ENCODE measurements at regions of chr14 and their contacts with region 1.

Region 1: DNA sequence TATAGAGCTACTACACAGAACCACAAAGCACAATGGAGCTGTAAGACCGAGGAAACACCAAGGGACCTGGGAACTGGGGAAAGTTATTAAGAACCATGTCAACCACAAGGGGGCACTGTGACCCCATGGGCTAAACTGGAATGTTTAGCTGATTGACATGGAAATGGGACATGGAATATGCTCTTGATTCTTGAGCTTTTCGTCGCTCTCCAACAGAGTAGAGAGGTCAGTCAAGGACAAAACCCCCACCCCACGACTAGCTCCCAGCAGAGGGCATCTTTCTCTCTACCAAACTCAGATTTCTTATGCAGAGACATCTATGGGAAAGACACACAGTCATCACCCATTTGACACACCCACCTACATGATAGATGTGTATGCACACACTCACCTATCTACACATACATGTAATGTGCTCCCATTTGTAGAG is 10.1 kb downstream of the NDRG2 start:
- DNase-seq: peak; percentile 65
- H3K4me3 ChIP-seq: no peak overlapping the region
- H3K27ac ChIP-seq: no peak overlapping the region
- H3K27me3 ChIP-seq: peaks cover 20% of the 10 kb centered on the region
- CTCF ChIP-seq: peak; percentile 96

Region 2: DNA sequence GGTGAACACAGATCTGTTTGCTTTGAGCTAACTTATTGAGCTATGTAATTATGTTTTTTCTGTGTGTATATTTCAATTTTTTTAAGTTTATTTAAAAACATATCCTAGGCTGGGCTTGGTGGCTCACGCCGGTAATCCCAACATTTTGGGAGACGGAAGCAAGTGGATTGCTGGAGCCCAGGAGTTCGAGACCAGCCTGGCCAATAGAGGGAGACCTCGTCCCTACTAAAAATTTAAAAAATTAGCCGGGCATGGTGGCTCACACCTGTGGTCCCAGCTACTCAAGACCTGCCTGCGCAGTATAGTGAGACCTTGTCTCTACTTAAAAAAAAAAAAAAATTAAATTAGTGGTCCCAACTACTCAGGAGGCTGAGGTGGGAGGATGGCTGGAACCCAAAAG is 195.9 kb before region 1 on chr14:
- CTCF ChIA-PET with region 1: no interaction called
- POLR2A ChIA-PET with region 1: no interaction called
- DNase-seq: no peak
- H3K4me3 ChIP-seq: no peak overlapping the region
- H3K27ac ChIP-seq: no peak overlapping the region
- H3K27me3 ChIP-seq: no peaks in the 10 kb centered on the region
- CTCF ChIP-seq: no peak

Region 3: DNA sequence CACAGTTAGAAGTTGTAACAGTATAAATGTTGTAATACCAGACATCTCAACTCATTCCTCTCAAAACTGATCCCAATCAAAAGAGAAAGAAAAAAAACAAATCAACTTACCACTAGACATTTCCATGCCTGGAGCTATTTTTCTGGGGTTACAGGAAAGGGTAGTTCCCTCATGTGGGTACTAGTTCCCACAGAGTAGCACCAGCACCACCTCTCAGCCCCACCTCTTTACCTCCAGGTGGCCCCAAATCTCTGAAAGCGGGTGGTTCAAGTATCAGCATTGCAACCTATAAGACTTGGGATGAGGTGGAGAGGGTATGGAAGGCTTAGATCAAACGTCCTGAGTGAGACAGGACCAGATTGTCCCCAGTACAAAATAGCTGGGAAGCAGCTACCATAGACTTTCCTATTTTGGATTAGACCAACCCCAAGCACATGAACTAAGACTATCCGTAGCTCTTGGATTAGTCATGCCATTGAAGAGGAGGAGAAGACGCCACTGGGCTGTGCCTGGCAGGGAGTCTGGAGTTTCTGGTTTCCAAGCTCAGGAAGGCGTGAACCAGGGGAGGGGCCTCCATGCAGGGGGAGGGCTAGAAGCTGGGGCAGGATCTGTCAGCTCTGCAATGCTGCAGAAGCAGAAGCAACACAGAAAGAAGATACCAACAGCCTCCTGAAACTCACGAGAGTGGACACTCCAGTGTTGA is 16.0 kb before region 1 on chr14 and contains the start of gene SLC39A2:
- CTCF ChIA-PET with region 1: interaction called, 83 read pairs
- POLR2A ChIA-PET with region 1: no interaction called
- DNase-seq: no peak
- H3K4me3 ChIP-seq: no peak within 1 kb of the TSS
- H3K27ac ChIP-seq: no peak within 1 kb of the TSS
- H3K27me3 ChIP-seq: no peaks in the 10 kb centered on the region
- CTCF ChIP-seq: no peak
- polyA plus RNA-seq, gene SLC39A2: 0.06 TPM in 1 of 2 replicates, not detected in the other

Region 4: GRCh38 chr14:21032326-21033132 is 17.8 kb after region 1 on chr14:
- CTCF ChIA-PET with region 1: interaction called, 24 read pairs
- POLR2A ChIA-PET with region 1: no interaction called
- DNase-seq: no peak
- H3K4me3 ChIP-seq: no peak overlapping the region
- H3K27ac ChIP-seq: no peak overlapping the region
- H3K27me3 ChIP-seq: peaks cover 42% of the 10 kb centered on the region
- CTCF ChIP-seq: no peak

Region 5: DNA sequence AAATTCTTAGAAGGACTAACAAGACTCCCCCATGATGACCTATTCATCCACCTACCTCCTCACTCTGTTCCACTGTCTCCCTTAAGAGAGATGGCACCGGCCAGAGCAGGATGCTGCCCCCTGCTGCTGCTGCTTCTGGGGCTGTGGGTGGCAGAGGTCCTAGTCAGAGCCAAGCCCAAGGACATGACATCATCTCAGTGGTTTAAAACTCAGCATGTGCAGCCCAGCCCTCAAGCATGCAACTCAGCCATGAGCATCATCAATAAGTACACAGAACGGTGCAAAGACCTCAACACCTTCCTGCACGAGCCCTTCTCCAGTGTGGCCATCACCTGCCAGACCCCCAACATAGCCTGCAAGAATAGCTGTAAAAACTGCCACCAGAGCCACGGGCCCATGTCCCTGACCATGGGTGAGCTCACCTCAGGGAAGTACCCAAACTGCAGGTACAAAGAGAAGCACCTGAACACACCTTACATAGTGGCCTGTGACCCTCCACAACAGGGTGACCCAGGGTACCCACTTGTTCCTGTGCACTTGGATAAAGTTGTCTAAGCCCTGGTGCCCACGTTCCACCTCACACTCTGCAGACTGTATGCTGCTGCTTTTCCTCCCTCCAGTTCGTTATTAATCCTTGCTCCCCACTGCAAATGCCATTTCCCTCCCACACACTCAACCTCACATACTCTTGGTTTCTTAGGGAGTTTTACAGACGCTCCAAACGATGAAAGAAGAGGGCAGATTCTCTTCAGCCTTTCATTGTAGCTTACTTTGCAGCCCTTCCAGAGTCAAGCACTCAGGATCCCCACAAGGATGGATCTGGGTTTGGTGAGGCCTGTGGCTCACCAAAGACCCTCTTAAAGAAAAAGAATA is 43.3 kb after region 1 on chr14 and contains the start of gene RNASE8:
- CTCF ChIA-PET with region 1: interaction called, 38 read pairs
- POLR2A ChIA-PET with region 1: no interaction called
- DNase-seq: no peak
- H3K4me3 ChIP-seq: no peak within 1 kb of the TSS
- H3K27ac ChIP-seq: peak within 1 kb of the TSS; percentile 52
- H3K27me3 ChIP-seq: no peaks in the 10 kb centered on the region
- CTCF ChIP-seq: peak; percentile 32
- polyA plus RNA-seq, gene RNASE8: not detected in 2 replicates

Region 6: GRCh38 chr14:21092273-21093011 is 77.7 kb after region 1 on chr14:
- CTCF ChIA-PET with region 1: interaction called, 191 read pairs
- POLR2A ChIA-PET with region 1: interaction called, 3 read pairs
- DNase-seq: no peak
- H3K4me3 ChIP-seq: no peak overlapping the region
- H3K27ac ChIP-seq: no peak overlapping the region
- H3K27me3 ChIP-seq: no peaks in the 10 kb centered on the region
- CTCF ChIP-seq: peak; percentile 100

Region 7: GRCh38 chr14:21136024-21136423 is 121.2 kb after region 1 on chr14:
- CTCF ChIA-PET with region 1: interaction called, 36 read pairs
- POLR2A ChIA-PET with region 1: no interaction called
- DNase-seq: no peak
- H3K4me3 ChIP-seq: no peak overlapping the region
- H3K27ac ChIP-seq: no peak overlapping the region
- H3K27me3 ChIP-seq: peaks cover 2% of the 10 kb centered on the region
- CTCF ChIP-seq: peak; percentile 74

Region 8: DNA sequence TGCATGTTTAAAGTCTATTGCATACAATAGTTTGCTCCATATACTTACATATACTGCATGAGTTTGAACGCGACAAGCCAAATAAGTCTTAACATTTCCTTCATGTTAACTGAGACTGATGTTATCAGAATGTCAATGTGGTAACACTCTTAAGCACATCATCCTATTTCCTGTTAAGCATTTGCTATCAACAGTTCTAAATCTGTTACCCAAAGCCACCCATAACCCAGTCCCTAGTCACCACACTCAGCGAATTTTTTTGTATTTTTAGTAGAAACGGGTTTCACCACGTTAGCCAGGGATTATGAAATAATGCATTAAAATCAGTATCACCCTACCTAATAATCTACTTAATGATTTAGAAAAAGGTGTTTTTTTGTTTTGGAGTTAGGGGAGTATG is 215.0 kb after region 1 on chr14:
- CTCF ChIA-PET with region 1: no interaction called
- POLR2A ChIA-PET with region 1: no interaction called
- DNase-seq: no peak
- H3K4me3 ChIP-seq: no peak overlapping the region
- H3K27ac ChIP-seq: no peak overlapping the region
- H3K27me3 ChIP-seq: no peaks in the 10 kb centered on the region
- CTCF ChIP-seq: no peak

Measured in AG04450 (cell line).